GM10248 (cell line): ENCODE measurements at regions of chr3 and their contacts with region 1.

Region 1: DNA sequence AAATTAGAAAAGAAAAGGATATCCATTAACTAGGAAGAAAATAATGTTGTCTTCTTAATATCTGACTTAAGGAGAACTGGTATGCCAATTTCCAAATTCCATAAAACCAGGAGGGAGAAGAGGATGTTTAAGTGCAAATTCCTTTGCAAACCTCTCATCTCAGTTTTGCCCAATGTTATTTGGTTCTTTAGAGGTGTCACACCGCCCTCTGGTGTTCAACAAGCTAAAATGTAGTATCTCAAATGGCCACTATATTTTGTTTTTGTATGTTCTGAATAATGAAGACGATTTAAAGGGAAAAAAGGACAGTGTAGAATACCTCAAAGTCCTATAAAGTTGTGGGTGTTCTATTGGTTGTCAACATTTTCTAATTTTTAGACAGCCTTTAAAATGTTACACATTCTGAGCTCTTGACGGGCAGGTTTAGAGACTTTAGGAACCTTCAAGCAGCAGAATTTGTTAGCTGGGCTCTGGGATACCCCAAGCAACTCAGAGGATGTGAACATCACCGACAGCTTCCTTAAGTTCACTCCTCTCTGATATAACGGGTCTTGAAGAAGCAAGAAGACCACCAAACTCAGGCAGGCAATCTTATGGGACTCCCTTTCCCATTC is 458.3 kb downstream of the MFSD1 start:
- DNase-seq: peak; percentile 34
- CTCF ChIP-seq: peak; percentile 65

Region 2: DNA sequence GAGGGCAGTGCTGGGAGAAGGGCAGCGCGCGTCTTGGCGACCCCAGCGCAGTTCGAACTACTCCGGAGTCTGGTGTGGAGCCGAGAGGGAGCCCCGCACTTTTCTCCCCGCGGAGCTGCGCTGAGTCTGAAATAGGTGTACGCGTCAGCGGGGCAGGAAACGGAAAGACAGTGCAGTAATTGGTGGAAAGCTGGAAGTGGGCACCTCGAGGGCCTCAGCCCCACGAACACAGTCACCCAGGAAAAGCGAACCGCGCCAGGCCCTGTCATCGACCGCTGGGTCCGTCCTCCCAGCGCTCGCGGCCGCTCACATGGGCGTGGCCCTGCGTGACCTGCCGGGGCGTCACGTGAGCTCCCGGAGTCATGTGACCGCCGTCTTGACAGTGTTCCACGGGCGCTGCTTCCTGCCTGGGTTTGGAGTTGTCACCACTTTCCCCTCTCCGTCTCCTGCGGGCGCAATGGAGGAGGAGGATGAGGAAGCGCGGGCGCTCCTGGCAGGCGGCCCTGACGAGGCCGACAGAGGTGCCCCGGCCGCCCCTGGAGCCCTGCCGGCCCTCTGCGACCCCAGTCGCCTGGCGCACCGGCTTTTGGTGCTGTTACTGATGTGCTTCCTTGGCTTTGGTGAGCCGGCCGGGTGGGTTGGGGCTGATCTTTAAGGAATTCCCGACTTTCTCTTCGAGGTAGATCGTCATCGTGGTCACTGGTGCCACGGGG is 458.3 kb before region 1 on chr3 and contains the start of gene MFSD1:
- CTCF ChIA-PET with region 1: interaction called, 11 read pairs
- POLR2A ChIA-PET with region 1: no interaction called
- DNase-seq: peak; percentile 93
- CTCF ChIP-seq: no peak

Region 3: DNA sequence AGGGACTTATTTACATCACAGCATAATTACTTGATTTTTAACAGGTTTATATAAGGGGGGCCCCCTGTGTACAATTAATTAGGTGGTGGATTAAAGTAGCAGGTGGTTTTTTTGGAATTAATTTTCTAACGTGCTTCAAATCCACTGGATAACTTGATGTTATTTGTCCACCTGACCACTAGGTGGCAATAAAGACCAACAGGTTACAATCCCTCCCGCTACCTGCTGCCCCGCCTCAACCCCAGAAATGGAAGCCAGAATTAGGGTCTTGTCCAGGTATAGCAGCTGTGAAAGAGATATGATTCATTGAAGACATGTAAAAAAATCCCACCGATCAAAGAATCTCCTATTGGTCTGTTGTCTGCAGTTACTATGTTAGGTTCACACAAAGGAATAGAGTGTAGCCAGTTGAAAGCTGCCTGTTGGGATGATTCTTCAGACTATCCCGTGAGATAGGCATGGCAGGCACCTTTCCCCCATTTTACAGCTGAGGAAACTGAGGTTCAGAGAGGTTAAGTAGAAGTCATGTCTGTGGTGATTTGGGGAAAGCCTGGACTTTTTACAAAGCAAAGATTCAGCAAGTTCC is 414.3 kb before region 1 on chr3:
- CTCF ChIA-PET with region 1: interaction called, 146 read pairs
- POLR2A ChIA-PET with region 1: no interaction called
- DNase-seq: peak; percentile 62
- CTCF ChIP-seq: peak; percentile 70

Region 4: DNA sequence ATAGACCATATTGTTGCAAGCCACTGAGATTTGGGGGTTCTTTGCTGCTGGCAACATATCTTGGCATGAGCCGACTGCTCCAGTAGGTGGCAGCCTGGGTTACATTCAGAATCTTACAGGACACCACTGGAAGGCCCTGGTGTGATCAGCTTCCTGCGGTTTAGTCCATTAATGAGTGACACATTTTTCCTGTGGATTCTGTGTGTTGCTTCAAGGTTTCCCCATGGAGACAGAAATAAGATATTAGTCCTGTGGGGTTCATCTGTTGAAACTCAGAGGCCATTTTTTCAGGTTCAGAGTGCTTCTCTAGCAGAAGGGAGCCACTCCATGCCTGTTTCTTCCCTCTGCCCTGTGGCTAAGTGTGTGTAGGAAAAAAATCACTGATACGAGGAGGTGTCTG is 342.1 kb before region 1 on chr3:
- CTCF ChIA-PET with region 1: interaction called, 12 read pairs
- POLR2A ChIA-PET with region 1: no interaction called
- DNase-seq: peak; percentile 27
- CTCF ChIP-seq: peak; percentile 67

Region 5: GRCh38 chr3:159130108-159130507 is 130.0 kb before region 1 on chr3:
- CTCF ChIA-PET with region 1: interaction called, 39 read pairs
- POLR2A ChIA-PET with region 1: no interaction called
- DNase-seq: peak; percentile 11
- CTCF ChIP-seq: peak; percentile 33

Region 6: DNA sequence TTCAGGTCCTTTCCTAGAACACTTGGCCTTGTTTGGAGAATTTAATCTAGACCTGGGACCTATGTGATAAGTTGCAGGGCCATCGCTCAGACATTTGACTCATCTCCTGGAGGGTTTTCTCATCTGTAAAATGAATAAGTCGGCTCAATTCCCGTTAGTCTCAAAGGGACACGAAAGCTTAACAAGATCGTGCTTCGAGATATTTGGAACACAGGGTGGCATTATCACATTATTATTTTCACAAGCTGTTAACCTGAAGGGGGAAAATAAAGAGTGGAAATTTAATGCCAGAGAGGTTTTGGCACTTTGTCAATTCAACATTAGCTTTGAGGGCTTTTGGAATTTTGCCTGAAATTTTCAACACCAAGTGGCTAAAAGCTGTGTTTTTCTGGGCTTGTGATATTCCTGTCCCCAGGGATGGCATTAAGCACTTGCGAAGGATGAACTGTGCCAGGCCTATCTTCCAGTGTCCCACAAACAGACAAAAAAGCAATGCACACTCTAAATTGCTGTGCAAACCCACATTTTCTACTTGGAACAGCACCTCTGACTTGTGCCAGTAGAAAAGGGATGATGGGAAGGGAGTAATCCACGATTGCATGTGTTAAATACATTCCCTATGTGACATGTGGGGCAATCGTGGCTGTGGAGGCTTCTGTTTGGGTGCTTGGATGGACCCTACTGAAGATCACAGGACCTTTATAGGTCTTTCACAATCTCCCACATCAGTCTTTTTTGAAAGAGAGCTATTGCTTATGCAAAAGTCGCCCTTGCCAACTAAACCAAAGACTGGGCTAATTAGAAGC is 20.4 kb after region 1 on chr3:
- CTCF ChIA-PET with region 1: interaction called, 11 read pairs
- POLR2A ChIA-PET with region 1: no interaction called
- DNase-seq: no peak
- CTCF ChIP-seq: no peak

Region 7: GRCh38 chr3:159804726-159805410 is 544.7 kb after region 1 on chr3:
- CTCF ChIA-PET with region 1: interaction called, 36 read pairs
- POLR2A ChIA-PET with region 1: no interaction called
- DNase-seq: peak; percentile 72
- CTCF ChIP-seq: peak; percentile 85